ENCODE measurements at regions of chr2 and their contacts with region 1.

Region 1: DNA sequence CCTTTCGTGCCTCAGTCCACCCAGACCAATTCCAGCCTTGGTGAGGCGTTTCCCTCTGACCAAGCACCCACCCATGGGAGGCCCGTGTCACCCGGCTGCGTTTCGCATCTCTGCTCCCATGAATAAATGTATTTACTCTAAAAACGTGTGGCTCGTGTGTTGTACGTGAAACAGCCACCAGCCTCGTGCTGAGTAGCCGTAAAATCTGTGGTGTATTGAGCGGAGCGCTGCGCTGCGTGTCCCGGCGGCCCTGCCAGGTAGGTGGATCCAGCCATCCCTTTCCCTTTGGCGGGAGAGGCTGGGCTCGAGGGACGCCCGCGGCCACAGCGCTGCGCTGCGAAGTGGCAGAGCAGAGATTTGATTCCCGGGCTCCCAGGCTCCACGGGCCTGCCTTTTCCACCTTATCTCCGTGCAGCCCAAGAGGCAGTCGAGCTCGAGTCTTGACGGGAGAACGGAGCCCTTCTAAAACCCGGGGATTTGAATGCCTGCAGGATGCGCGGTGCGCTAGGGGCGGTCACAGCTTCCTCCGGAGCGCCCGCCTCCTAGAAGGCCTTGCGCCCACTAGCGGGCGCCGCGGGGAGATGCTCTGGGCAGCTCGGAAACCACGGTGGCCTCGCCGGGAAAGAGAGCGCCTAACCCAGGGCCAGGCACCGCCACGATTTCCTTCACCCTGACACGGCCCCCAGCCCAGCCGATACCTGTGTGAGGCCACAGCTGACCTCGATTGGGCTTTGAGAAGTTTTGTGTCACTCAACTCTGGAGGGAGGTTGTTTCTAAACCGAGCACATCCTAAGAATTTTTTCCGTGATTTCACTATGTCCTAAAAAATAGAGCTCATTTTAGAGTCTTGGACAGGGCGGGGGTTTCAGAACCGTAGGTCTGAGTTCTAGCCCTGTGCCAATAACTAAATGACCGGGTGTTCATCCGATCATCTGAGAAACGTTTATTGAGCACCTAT is 3.9 kb upstream of the PSMD1 start:
- DNase-seq: peak; percentile 90
- H3K4me3 ChIP-seq: peak overlapping the region; percentile 60 to 68
- H3K27ac ChIP-seq: peak overlapping the region in 1 of 2 experiments; percentile 56; a peak in 2 of 4 replicates
- H3K4me1 ChIP-seq: peaks cover 0 to 10% of the 10 kb centered on the region in 2 experiments; a peak in 2 of 4 replicates
- H3K27me3 ChIP-seq: no peaks in the 10 kb centered on the region
- CTCF ChIP-seq: peak; percentile 88
- EP300 ChIP-seq: no peak
- RAD21 ChIP-seq: peak; percentile 53

Region 2: DNA sequence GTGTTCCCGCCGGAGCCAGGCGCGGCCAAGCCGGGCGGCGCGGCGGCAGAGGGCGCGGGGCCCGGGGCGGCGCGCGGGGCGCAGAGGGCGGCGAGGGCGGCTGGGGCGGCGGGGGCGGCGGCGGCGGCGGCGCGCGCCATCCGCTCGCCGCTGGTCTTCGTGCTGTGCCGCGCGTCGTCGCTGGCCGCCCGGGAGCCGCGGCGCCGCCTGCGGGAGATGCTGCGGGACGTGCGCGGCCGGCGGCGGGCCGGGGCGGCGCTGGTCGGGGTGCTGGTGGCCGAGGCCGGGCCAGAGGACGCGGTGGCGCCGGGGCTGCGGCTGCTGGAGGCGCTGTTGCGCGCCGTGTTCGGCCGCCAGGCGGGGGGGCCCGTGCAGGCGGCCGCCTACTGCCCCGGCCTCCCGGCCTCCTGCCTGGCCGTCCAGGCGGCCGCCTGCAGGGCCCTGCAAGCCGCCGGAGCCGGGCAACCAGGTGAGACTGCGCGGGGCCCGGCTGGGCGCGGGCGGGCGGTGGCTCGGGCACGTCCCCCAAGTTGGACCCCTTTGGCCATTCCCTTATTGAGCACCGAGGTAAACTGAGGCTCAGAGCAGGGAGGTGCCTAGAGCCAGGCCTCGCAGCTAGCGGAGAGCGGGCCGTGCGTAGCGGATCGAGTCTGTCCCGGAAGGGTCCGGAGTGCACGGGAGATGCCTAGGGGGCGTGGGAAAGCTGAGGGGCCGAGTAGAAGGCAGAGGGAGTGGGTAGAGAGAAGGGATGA is 14.9 kb before region 1 on chr2:
- CTCF ChIA-PET with region 1: interaction called, 39 read pairs
- POLR2A ChIA-PET with region 1: no interaction called
- DNase-seq: peak; percentile 91
- H3K4me3 ChIP-seq: peak overlapping the region in 1 of 2 experiments; percentile 47; a peak in 2 of 4 replicates
- H3K27ac ChIP-seq: no peak overlapping the region
- H3K4me1 ChIP-seq: peaks cover 0 to 6% of the 10 kb centered on the region in 2 experiments; a peak in 1 of 4 replicates
- H3K27me3 ChIP-seq: peaks cover 32% of the 10 kb centered on the region
- CTCF ChIP-seq: no peak
- EP300 ChIP-seq: no peak
- RAD21 ChIP-seq: no peak

Region 3: GRCh38 chr2:231094736-231095346 is 42.1 kb after region 1 on chr2:
- CTCF ChIA-PET with region 1: interaction called, 13 read pairs
- POLR2A ChIA-PET with region 1: no interaction called
- DNase-seq: no peak
- H3K4me3 ChIP-seq: no peak overlapping the region
- H3K27ac ChIP-seq: no peak overlapping the region
- H3K4me1 ChIP-seq: no peaks in the 10 kb centered on the region
- H3K27me3 ChIP-seq: no peaks in the 10 kb centered on the region
- CTCF ChIP-seq: no peak
- EP300 ChIP-seq: no peak
- RAD21 ChIP-seq: no peak

Measured in SK-N-SH (cell line).